PC-3 (cell line): ENCODE measurements at regions of chr20 and their contacts with region 1.

Region 1: GRCh38 chr20:63223221-63224207 is 7.6 kb upstream of the YTHDF1 start:
- DNase-seq: peak; percentile 61
- ATAC-seq: peak; percentile 59
- H3K4me3 ChIP-seq: no peak overlapping the region
- H3K27ac ChIP-seq: no peak overlapping the region
- H3K4me1 ChIP-seq: peaks cover 9% of the 10 kb centered on the region; the same call in 1 of the 2 replicates
- H3K27me3 ChIP-seq: no peaks in the 10 kb centered on the region
- CTCF ChIP-seq: peak; percentile 95

Region 2: GRCh38 chr20:63089051-63089891 is 134.2 kb before region 1 on chr20:
- CTCF ChIA-PET with region 1: no interaction called
- POLR2A ChIA-PET with region 1: no interaction called
- intact Hi-C with region 1: no loop called
- DNase-seq: peak; percentile 69
- ATAC-seq: peak; percentile 72
- H3K4me3 ChIP-seq: no peak overlapping the region
- H3K27ac ChIP-seq: no peak overlapping the region
- H3K4me1 ChIP-seq: peaks cover 13% of the 10 kb centered on the region
- H3K27me3 ChIP-seq: peaks cover 77% of the 10 kb centered on the region
- CTCF ChIP-seq: peak; percentile 28; the same call in 1 of the 2 replicates

Region 3: DNA sequence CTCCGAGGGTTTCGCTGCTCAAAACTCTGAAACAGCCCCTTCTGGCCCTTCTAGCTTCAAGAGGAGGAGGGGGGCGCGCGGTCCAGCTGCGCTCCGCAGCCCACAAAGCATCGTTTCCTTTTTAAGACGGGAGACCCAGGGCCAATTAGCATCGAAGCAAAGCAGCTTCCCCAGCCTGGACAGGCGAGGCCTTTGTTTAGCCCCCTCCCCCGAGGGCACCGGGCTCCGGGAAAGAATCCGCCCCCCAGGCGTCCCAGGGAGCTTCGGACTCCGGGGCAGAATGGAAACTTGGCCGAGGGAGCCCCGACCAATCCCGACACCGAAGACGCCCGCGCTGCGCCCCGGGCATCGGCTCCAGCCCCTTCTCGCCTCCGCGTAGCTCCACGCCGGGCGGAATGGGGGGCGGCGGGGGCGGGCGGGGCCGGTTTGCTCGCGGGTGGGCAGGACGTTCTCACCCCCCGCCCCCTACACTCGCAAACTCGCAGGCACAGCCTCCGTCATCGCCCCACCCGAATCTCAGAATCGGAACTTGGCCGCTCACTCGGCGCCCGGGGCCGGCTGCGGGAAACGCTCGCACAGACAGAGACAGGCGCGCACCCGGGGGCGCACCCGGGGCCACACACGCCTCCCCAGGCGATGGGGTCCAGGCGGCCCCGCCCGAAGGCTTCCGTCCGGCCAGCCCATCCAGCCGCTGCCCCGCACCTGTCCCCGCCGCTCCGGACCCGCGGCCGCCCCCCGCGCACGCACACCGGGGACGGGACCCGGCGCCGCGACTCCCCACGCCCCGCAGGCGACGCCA is 30.1 kb after region 1 on chr20:
- CTCF ChIA-PET with region 1: interaction called, 15 read pairs
- POLR2A ChIA-PET with region 1: interaction called, 3 read pairs
- intact Hi-C with region 1: loop called (anchors 1 kb)
- DNase-seq: no peak
- ATAC-seq: no peak
- H3K4me3 ChIP-seq: no peak overlapping the region
- H3K27ac ChIP-seq: no peak overlapping the region
- H3K4me1 ChIP-seq: peaks cover 9% of the 10 kb centered on the region; the same call in 1 of the 2 replicates
- H3K27me3 ChIP-seq: peaks cover 40% of the 10 kb centered on the region
- CTCF ChIP-seq: no peak

Region 4: GRCh38 chr20:63278661-63279060 is 55.1 kb after region 1 on chr20:
- CTCF ChIA-PET with region 1: no interaction called
- POLR2A ChIA-PET with region 1: no interaction called
- intact Hi-C with region 1: no loop called
- DNase-seq: no peak
- ATAC-seq: no peak
- H3K4me3 ChIP-seq: no peak overlapping the region
- H3K27ac ChIP-seq: no peak overlapping the region
- H3K4me1 ChIP-seq: peaks cover 8% of the 10 kb centered on the region; the same call in 1 of the 2 replicates
- H3K27me3 ChIP-seq: no peaks in the 10 kb centered on the region
- CTCF ChIP-seq: no peak